ENCODE measurements at regions of chr10 and their contacts with region 1.

Region 1: GRCh38 chr10:49592726-49593563 is 17.2 kb upstream of the SLC18A3 start:
- DNase-seq: peak; percentile 65
- ATAC-seq: peak; percentile 74
- H3K4me3 Mint-ChIP-seq: no peak overlapping the region
- H3K27ac Mint-ChIP-seq: no peak overlapping the region
- H3K4me1 Mint-ChIP-seq: no peaks in the 10 kb centered on the region
- H3K27me3 Mint-ChIP-seq: peaks cover 17% of the 10 kb centered on the region
- CTCF ChIP-seq: peak; percentile 88

Region 2: DNA sequence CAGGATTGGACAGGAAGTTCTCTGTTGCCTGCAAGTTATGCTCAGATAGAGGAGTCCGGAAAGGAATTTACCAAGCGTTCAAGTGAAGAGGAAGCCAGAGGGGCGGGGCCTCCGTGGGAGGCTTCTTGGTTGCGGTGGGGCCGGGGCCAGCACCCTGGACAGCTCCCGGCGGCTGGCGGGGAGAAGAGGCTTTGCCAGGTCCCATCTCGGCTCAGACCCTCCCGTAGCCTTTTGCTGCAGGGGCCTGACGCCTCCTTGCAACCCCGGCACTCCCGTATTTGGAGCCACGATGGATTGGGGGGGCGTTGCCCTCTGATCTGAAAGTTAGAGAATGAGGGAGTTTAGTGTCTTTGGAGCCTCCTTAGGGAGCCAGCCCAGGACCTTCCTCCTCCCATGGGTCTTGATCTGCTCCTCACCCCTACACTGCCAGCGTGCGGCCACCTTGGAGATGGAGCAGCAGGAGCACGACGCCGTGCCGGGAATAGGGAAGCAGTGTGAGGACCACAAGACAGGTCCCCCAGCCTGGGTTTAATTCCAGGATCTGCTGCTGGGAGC is 14.1 kb after region 1 on chr10:
- CTCF ChIA-PET with region 1: interaction called, 12 read pairs
- POLR2A ChIA-PET with region 1: no interaction called
- intact Hi-C with region 1: no loop called
- DNase-seq: peak; percentile 86
- ATAC-seq: peak; percentile 88
- H3K4me3 Mint-ChIP-seq: no peak overlapping the region
- H3K27ac Mint-ChIP-seq: no peak overlapping the region
- H3K4me1 Mint-ChIP-seq: no peaks in the 10 kb centered on the region
- H3K27me3 Mint-ChIP-seq: peaks cover 64% of the 10 kb centered on the region
- CTCF ChIP-seq: no peak

Region 3: GRCh38 chr10:49741108-49741995 is 148.4 kb after region 1 on chr10:
- CTCF ChIA-PET with region 1: no interaction called
- POLR2A ChIA-PET with region 1: no interaction called
- intact Hi-C with region 1: loop called (anchors 10 kb)
- DNase-seq: no peak
- ATAC-seq: no peak
- H3K4me3 Mint-ChIP-seq: no peak overlapping the region
- H3K27ac Mint-ChIP-seq: no peak overlapping the region
- H3K4me1 Mint-ChIP-seq: no peaks in the 10 kb centered on the region
- H3K27me3 Mint-ChIP-seq: no peaks in the 10 kb centered on the region
- CTCF ChIP-seq: no peak

Region 4: DNA sequence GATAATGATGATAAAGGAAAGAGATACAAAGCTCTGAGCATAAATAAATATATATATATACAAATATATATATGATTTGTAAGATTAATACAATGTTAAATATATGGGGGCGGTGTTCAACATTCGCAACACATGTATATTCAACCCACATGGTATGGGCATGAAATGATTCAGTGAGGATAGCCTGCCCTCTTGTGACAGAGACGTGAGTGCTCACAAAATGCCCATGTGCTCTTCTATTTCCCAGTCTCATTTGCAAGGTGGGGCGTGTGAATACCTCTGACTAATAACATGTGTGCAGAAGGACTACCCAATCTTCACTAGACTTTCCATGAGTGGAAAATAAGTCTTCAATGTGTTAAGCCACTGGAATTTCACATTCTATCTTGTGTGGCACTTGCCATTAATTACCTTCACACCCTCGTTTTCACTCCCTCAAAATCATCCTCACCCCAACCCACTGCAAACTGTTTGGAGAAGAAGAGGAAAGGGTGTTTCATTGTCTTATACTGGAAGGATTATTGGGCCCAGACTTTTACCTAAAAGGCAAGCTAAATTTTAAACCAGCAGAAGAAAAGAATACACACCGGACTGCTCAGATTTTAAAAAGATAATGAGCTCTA is 631.5 kb after region 1 on chr10:
- CTCF ChIA-PET with region 1: interaction called, 9 read pairs
- POLR2A ChIA-PET with region 1: no interaction called
- intact Hi-C with region 1: loop called (anchors 5 kb)
- DNase-seq: peak; percentile 54
- ATAC-seq: peak; percentile 97
- H3K4me3 Mint-ChIP-seq: no peak overlapping the region
- H3K27ac Mint-ChIP-seq: no peak overlapping the region
- H3K4me1 Mint-ChIP-seq: peaks cover 5% of the 10 kb centered on the region
- H3K27me3 Mint-ChIP-seq: peaks cover 20% of the 10 kb centered on the region
- CTCF ChIP-seq: peak; percentile 49